Endothelial cell of umbilical vein (primary cell): ENCODE measurements at regions of chr17 and their contacts with region 1.

Region 1: DNA sequence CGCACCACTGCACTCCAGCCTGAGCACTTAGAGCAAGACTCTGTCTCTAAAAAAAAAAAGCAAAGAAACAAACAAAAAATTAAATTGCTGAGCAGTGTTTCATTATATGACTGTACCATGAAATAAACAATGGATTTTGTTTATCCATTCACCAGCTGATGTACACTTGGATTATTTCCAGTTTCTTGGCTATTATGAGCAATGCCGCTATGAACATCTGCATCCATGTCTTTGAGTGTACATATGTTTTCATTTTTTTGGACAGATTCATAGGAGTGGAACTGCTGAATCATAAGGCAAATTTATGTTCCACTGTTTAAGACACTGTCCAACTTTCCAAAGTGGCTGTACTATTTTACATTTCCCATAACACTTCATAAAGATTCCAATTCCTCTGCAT is 8.0 kb downstream of the RNF157 start:
- DNase-seq: no peak
- H3K4me3 ChIP-seq: no peak overlapping the region
- H3K27ac ChIP-seq: no peak overlapping the region
- H3K4me1 ChIP-seq: no peaks in the 10 kb centered on the region
- H3K27me3 ChIP-seq: peaks cover 22 to 27% of the 10 kb centered on the region in 2 experiments
- CTCF ChIP-seq: no peak
- POLR2A ChIP-seq: no peak

Region 2: GRCh38 chr17:76219670-76220383 is 12.5 kb before region 1 on chr17:
- CTCF ChIA-PET with region 1: interaction called, 3 read pairs
- POLR2A ChIA-PET with region 1: interaction called, 5 read pairs
- dilution Hi-C with region 1: no loop called
- intact Hi-C with region 1: loop called (anchors 1 kb)
- DNase-seq: no peak
- H3K4me3 ChIP-seq: no peak overlapping the region
- H3K27ac ChIP-seq: no peak overlapping the region
- H3K4me1 ChIP-seq: no peaks in the 10 kb centered on the region
- H3K27me3 ChIP-seq: peaks cover 3 to 6% of the 10 kb centered on the region in 2 experiments
- CTCF ChIP-seq: no peak
- POLR2A ChIP-seq: no peak

Region 3: DNA sequence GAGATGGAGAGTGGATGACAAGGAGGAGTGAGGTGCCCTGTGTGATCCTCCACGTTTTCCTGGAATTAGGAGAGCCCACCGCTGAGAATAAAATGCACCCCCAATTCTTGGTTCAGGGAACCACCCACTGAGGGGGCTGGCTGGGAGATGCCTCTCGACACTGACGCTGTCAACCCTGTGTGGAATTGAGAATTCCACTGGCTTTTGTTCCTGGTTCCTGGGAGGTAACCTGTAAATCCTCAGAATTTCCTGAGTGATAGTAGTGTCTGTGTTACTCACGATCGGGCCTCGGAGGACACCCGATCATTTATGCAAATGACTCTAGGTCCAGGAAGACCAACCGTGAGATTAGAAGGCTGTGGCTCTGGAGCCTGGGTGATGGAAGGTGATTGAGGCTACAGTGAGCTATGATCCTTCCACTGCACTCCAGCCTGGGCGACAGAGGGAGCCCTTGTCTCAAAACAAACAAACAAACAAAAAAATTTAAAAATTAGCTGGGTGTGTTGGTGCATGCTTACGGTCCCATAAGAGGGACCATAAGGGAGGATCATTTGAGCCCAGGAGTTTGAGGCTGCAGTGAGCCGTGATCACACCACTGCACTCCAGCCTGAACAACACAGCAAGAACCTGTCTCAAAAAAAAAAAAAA is 133.0 kb after region 1 on chr17:
- CTCF ChIA-PET with region 1: no interaction called
- POLR2A ChIA-PET with region 1: no interaction called
- dilution Hi-C with region 1: no loop called
- intact Hi-C with region 1: no loop called
- DNase-seq: no peak
- H3K4me3 ChIP-seq: no peak overlapping the region
- H3K27ac ChIP-seq: no peak overlapping the region
- H3K4me1 ChIP-seq: peaks cover 6% of the 10 kb centered on the region
- H3K27me3 ChIP-seq: no peaks in the 10 kb centered on the region
- CTCF ChIP-seq: peak; percentile 30 to 33
- POLR2A ChIP-seq: no peak